B cell (primary cell): ENCODE measurements at regions of chr19 and their contacts with region 1.

Region 1: DNA sequence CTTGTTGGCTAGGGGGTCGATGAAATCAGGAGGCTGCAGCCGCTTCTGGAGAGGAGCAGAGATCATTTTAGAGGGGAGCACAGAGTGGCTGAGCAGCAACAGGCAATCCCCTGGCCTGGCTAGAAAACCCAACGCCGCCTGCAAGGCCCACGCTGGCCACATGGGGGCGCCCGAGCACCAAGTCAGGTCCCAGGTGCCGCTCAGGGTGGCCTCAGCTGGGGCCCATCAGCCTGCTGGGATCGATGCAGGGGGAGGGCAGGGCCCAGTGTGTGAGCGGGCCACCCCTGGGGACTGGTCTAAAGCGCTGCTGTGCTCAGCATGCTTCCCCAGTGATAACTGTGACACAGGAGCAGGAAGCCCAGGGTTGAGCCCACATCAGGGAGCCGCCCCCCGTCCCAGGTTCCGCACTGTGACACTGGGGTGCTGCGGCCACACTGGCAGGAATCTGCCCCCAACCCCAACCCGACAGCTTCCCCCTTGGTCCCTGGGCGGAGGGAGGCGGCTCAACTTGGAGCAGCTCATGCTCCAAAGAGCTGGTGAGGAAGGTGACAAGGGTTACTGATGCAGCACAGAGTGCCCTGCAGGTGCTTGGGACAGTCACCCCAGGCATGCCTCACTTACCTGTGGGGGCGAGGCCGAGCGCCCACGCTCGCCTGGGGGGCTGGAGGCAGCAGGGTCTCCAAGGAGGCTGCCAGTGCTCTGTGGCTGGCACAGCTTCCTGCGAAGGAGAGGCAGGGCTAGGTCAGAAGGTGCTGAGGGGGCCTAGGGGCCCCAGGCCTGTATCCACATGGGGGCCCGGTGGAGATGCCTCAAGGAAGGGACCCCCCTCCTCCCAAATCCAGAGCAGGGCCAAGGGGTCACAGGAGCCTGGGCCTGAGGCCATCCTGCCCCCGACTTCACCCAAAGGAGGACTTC is 13.3 kb upstream of the ISYNA1 start:
- DNase-seq: peak; percentile 87
- ATAC-seq: peak; percentile 96
- H3K4me3 ChIP-seq: no peak overlapping the region
- H3K4me3 Mint-ChIP-seq: no peak overlapping the region
- H3K27ac ChIP-seq: no peak overlapping the region
- H3K27ac Mint-ChIP-seq: peak overlapping the region; percentile 71
- H3K4me1 ChIP-seq: peaks cover 0 to 5% of the 10 kb centered on the region in 2 donors
- H3K4me1 Mint-ChIP-seq: peaks cover 6% of the 10 kb centered on the region
- H3K27me3 ChIP-seq: no peaks in the 10 kb centered on the region
- H3K27me3 Mint-ChIP-seq: no peaks in the 10 kb centered on the region
- CTCF ChIP-seq: peak; percentile 96

Region 2: DNA sequence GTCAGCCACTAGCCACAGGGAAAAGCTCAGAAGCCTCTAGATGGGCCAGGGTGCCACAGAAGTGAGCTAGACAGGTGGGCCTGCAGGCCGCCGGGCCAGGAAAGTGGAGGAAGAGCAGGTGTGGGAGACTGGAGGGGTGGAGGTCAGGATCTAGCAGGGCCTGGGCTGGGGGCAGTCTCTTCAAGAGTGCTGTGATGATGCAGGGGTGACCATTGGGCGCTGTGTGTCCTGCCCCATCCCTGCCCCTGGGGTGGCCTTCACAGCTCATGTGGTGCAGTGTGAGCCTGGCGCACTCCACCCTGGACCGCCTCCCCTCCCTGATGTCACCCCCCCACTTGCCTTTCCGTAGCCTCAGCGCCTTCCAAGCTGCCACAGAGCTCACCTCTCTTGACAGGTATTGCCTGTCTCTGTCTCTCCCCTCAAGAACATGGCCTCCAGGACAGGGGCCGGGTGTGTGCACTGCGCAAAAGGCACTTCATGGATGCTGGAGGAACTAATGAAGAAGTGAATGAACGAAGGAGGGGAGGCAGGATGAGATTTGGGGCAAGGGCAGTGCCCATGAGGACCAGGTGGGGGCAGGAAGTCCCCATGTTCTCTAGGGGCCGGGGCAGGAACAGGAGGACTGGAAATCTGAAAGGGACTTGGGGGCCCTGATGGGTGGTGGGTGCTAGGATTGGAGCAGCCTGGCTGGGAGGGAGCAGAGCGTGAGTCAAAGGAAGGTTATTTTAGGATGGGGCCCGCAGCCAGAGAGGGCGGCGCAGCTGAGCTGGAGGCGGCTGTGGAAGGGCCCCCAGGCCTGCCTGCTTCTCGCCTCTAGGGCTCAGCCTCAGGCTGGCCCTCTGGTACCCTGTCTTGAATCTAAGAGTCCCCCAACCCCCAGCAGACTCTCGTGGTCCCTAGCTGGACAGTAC is 25.4 kb before region 1 on chr19:
- CTCF ChIA-PET with region 1: no interaction called
- POLR2A ChIA-PET with region 1: no interaction called
- intact Hi-C with region 1: no loop called
- DNase-seq: peak; percentile 37
- ATAC-seq: no peak
- H3K4me3 ChIP-seq: no peak overlapping the region
- H3K4me3 Mint-ChIP-seq: no peak overlapping the region
- H3K27ac ChIP-seq: no peak overlapping the region
- H3K27ac Mint-ChIP-seq: peak overlapping the region; percentile 46
- H3K4me1 ChIP-seq: peaks cover 30 to 48% of the 10 kb centered on the region in 2 donors
- H3K4me1 Mint-ChIP-seq: peaks cover 37% of the 10 kb centered on the region
- H3K27me3 ChIP-seq: no peaks in the 10 kb centered on the region
- H3K27me3 Mint-ChIP-seq: no peaks in the 10 kb centered on the region
- CTCF ChIP-seq: no peak

Region 3: DNA sequence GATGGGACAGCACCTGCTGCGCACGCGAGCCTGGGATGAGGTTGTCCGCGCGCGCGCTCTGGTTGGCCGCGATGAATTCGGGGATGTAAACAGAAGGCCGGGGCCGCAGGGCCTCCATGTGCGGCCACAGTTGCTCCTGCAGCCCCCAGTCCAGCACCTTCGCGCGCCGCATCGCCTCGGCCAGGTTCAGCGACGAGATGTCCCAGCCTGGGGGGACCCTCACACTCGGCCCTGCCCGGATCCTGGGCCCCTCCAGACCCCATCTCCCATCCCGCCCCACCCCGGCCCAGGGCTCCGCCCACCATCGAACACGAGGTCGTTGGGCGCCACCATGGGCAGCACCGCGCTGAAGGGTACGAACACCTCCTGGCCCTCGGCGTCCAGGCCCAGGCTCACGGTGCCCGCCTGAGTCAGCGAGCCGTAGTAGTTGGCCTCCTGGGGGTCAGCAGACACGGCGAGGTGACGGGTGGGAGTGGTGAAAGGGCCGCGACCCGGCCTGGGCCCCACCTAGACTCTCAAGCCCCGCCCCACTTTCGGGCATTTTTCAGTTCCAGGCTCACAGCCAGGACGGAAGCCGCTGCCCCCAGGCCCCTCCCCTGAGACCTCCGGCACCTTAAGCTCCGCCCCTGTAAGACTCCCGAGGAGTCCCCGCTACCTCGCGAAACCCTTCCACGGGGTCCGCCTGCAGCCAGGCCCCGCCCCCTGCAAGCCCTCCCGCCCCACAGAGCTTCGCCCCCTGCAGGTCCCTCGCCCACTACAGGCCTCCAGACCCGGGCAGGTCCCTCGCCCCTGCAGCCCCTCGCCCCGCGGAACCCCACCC is 14.3 kb before region 1 on chr19:
- CTCF ChIA-PET with region 1: interaction called, 13 read pairs
- POLR2A ChIA-PET with region 1: no interaction called
- intact Hi-C with region 1: no loop called
- DNase-seq: peak; percentile 87
- ATAC-seq: peak; percentile 69
- H3K4me3 ChIP-seq: peak overlapping the region in 4 of 5 experiments; percentile 55 to 62 (median 60)
- H3K4me3 Mint-ChIP-seq: peak overlapping the region; percentile 84
- H3K27ac ChIP-seq: no peak overlapping the region
- H3K27ac Mint-ChIP-seq: peak overlapping the region; percentile 78
- H3K4me1 ChIP-seq: peaks cover 22 to 47% of the 10 kb centered on the region in 2 donors
- H3K4me1 Mint-ChIP-seq: peaks cover 34% of the 10 kb centered on the region
- H3K27me3 ChIP-seq: no peaks in the 10 kb centered on the region
- H3K27me3 Mint-ChIP-seq: no peaks in the 10 kb centered on the region
- CTCF ChIP-seq: peak; percentile 34

Region 4: GRCh38 chr19:18469069-18469846 is 18.1 kb after region 1 on chr19:
- CTCF ChIA-PET with region 1: interaction called, 85 read pairs
- POLR2A ChIA-PET with region 1: no interaction called
- intact Hi-C with region 1: no loop called
- DNase-seq: peak; percentile 70
- ATAC-seq: no peak
- H3K4me3 ChIP-seq: no peak overlapping the region
- H3K4me3 Mint-ChIP-seq: no peak overlapping the region
- H3K27ac ChIP-seq: no peak overlapping the region
- H3K27ac Mint-ChIP-seq: no peak overlapping the region
- H3K4me1 ChIP-seq: no peaks in the 10 kb centered on the region
- H3K4me1 Mint-ChIP-seq: peaks cover 10% of the 10 kb centered on the region
- H3K27me3 ChIP-seq: no peaks in the 10 kb centered on the region
- H3K27me3 Mint-ChIP-seq: no peaks in the 10 kb centered on the region
- CTCF ChIP-seq: peak; percentile 71

Region 5: DNA sequence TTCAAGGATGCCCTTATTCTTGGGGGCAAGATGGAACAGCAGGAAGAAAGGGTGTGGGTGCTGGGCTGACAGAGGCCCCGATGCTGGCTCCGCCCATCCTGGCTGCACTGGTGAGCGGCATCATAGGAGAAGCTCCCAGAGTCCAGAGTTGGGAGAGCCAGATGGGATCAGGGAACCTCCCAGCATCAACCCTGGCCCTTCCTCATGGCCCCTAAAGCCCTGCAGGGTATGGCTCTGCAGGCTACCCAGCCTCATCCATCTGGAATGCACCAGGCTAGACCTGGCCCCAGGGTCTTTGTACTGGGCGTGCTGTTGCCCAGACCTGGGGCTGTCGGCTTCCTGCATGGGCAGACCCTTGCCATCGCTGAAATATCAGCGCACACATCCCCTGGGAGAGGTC is 78.6 kb after region 1 on chr19:
- CTCF ChIA-PET with region 1: no interaction called
- POLR2A ChIA-PET with region 1: no interaction called
- intact Hi-C with region 1: no loop called
- DNase-seq: no peak
- ATAC-seq: no peak
- H3K4me3 ChIP-seq: no peak overlapping the region
- H3K4me3 Mint-ChIP-seq: no peak overlapping the region
- H3K27ac ChIP-seq: no peak overlapping the region
- H3K27ac Mint-ChIP-seq: no peak overlapping the region
- H3K4me1 ChIP-seq: no peaks in the 10 kb centered on the region
- H3K4me1 Mint-ChIP-seq: no peaks in the 10 kb centered on the region
- H3K27me3 ChIP-seq: no peaks in the 10 kb centered on the region
- H3K27me3 Mint-ChIP-seq: no peaks in the 10 kb centered on the region
- CTCF ChIP-seq: no peak